ENCODE measurements at regions of chr7 and their contacts with region 1.

Region 1: DNA sequence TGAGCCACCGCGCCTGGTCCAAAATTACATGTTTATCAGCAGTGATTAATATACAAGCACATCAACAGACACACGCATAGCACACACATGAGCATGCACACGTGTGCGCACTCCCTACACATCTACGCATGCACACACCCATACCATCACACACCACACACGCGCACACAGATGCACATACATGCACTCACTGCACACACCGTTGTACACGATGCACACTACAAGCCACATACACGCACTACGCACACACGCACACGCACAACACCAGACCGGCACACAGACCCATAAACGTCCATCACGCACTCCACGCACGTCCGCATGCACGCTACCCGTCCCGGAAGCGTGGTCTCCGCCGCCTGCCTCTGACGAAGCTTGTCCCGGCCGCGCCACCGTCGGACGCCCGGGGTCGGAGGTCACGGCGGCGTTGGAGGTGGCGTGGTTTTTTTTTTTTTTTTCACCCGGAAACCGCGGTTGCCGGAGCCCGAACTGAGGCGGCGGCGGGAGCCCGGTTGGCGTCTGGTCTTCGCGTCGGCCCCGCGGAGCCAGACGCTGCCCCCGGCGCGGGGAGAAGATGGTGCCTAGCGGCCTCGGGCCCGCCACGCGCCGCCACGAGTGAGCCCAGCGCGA is at the start of gene TMEM248:
- DNase-seq: peak; percentile 83
- H3K4me3 ChIP-seq: peak within 1 kb of the TSS; percentile 76 to 95 (median 86)
- H3K27ac ChIP-seq: peak within 1 kb of the TSS; percentile 80
- H3K4me1 ChIP-seq: peaks cover 5% of the 10 kb centered on the region
- H3K27me3 ChIP-seq: no peaks in the 10 kb centered on the region
- CTCF ChIP-seq: no peak
- POLR2A ChIP-seq: peak; percentile 61
- total RNA-seq, gene TMEM248: 97.6 and 107 TPM in 2 replicates

Region 2: GRCh38 chr7:66557608-66558143 is 363.2 kb before region 1 on chr7:
- CTCF ChIA-PET with region 1: no interaction called
- POLR2A ChIA-PET with region 1: no interaction called
- dilution Hi-C with region 1: no loop called
- intact Hi-C with region 1: loop called (anchors 5 kb)
- DNase-seq: peak; percentile 32
- H3K4me3 ChIP-seq: no peak overlapping the region
- H3K27ac ChIP-seq: no peak overlapping the region
- H3K4me1 ChIP-seq: no peaks in the 10 kb centered on the region
- H3K27me3 ChIP-seq: no peaks in the 10 kb centered on the region
- CTCF ChIP-seq: peak; percentile 82 to 96
- POLR2A ChIP-seq: no peak

Region 3: GRCh38 chr7:66952343-66953043 is 31.6 kb after region 1 on chr7:
- CTCF ChIA-PET with region 1: interaction called, 3 read pairs
- POLR2A ChIA-PET with region 1: no interaction called
- dilution Hi-C with region 1: no loop called
- intact Hi-C with region 1: loop called (anchors 1 kb)
- DNase-seq: peak; percentile 68
- H3K4me3 ChIP-seq: no peak overlapping the region
- H3K27ac ChIP-seq: peak overlapping the region; percentile 83
- H3K4me1 ChIP-seq: peaks cover 36% of the 10 kb centered on the region
- H3K27me3 ChIP-seq: no peaks in the 10 kb centered on the region
- CTCF ChIP-seq: no peak
- POLR2A ChIP-seq: no peak